ENCODE measurements at regions of chr5 and their contacts with region 1.

Region 1: GRCh38 chr5:1641560-1642166 is 117.9 kb upstream of the LPCAT1 start:
- DNase-seq: peak; percentile 79
- ATAC-seq: peak; percentile 62

Region 2: DNA sequence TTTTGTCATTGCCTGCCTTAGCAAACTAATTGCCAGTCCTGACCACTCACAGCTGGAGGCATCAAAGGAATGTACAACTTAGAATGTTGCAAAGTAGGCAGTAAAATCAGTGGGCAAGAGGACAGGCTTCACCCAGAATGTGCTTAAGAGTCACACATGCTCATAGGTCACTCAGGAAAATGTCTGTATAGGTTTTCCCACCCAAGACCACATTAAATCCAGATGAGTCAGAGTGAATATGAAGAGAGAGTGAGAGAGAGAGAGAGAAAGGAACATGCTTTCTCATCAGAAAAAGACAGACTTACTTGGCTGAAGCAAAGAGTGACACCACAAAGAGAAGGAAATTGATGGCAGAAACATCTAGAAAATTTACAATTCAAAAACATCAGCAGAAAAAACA is 1511.8 kb before region 1 on chr5:
- intact Hi-C with region 1: no loop called
- DNase-seq: no peak
- ATAC-seq: no peak

Region 3: GRCh38 chr5:982377-983237 is 659.1 kb before region 1 on chr5:
- intact Hi-C with region 1: loop called (anchors 5 kb)
- DNase-seq: peak; percentile 48
- ATAC-seq: no peak

Region 4: GRCh38 chr5:1167728-1168709 is 473.6 kb before region 1 on chr5:
- intact Hi-C with region 1: loop called (anchors 5 kb)
- DNase-seq: peak; percentile 83
- ATAC-seq: peak; percentile 83

Measured in sciatic nerve (tissue), 2 donors.